ENCODE measurements at regions of chr6 and their contacts with region 1.

Region 1: GRCh38 chr6:44630125-44631028 is 242.9 kb downstream of the CDC5L start:
- DNase-seq: peak; percentile 55 to 67 (median 61)
- H3K4me3 ChIP-seq: no peak overlapping the region
- H3K27ac ChIP-seq: no peak overlapping the region
- H3K4me1 ChIP-seq: peaks cover 0 to 12% (median 10%) of the 10 kb centered on the region in 4 experiments
- H3K27me3 ChIP-seq: no peaks in the 10 kb centered on the region

Region 2: GRCh38 chr6:44606504-44606903 is 23.9 kb before region 1 on chr6:
- CTCF ChIA-PET with region 1: no interaction called
- POLR2A ChIA-PET with region 1: no interaction called
- DNase-seq: no peak
- H3K4me3 ChIP-seq: no peak overlapping the region
- H3K27ac ChIP-seq: no peak overlapping the region
- H3K4me1 ChIP-seq: no peaks in the 10 kb centered on the region
- H3K27me3 ChIP-seq: no peaks in the 10 kb centered on the region

Region 3: GRCh38 chr6:44618371-44618770 is 12.0 kb before region 1 on chr6:
- CTCF ChIA-PET with region 1: interaction called, 15 read pairs
- POLR2A ChIA-PET with region 1: interaction called, 3 read pairs
- DNase-seq: peak in 2 of 3 donors; percentile 66
- H3K4me3 ChIP-seq: no peak overlapping the region
- H3K27ac ChIP-seq: no peak overlapping the region
- H3K4me1 ChIP-seq: peaks cover 3 to 15% (median 10%) of the 10 kb centered on the region in 4 experiments
- H3K27me3 ChIP-seq: no peaks in the 10 kb centered on the region

Region 4: DNA sequence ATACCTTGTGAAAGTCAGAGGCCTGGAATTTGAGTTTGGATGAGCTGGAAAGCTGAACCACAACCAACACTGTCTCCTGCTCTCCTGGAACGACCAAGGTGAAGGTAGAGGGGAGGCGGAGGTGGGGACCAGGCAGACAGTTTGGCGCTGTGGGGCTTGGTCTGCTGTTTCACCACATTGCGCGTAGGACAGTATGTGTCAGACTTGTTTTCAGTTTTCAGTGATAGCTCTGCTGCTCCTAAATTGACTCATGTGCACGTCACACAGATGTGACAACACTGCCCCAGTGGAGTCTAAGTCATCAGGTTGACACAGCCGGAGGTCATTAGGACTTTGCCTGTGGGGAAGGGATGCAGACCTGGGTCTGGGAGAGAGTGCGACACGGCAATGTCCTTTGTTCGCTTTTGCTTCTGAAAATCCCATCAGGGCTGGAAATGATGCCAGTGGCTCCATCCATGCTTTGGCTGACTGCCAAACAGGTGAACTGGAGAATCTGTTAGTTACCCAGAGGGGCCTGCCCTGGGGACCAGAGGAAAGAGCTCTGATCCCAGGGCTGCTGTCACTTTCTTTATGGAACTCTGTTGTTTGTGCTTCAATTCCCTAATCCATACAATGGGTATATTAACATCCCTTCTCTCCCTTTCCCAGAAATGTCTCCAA is 12.6 kb after region 1 on chr6:
- CTCF ChIA-PET with region 1: interaction called, 11 read pairs
- POLR2A ChIA-PET with region 1: no interaction called
- DNase-seq: no peak
- H3K4me3 ChIP-seq: no peak overlapping the region
- H3K27ac ChIP-seq: no peak overlapping the region
- H3K4me1 ChIP-seq: peaks cover 0 to 7% (median 4%) of the 10 kb centered on the region in 4 experiments
- H3K27me3 ChIP-seq: no peaks in the 10 kb centered on the region

Region 5: DNA sequence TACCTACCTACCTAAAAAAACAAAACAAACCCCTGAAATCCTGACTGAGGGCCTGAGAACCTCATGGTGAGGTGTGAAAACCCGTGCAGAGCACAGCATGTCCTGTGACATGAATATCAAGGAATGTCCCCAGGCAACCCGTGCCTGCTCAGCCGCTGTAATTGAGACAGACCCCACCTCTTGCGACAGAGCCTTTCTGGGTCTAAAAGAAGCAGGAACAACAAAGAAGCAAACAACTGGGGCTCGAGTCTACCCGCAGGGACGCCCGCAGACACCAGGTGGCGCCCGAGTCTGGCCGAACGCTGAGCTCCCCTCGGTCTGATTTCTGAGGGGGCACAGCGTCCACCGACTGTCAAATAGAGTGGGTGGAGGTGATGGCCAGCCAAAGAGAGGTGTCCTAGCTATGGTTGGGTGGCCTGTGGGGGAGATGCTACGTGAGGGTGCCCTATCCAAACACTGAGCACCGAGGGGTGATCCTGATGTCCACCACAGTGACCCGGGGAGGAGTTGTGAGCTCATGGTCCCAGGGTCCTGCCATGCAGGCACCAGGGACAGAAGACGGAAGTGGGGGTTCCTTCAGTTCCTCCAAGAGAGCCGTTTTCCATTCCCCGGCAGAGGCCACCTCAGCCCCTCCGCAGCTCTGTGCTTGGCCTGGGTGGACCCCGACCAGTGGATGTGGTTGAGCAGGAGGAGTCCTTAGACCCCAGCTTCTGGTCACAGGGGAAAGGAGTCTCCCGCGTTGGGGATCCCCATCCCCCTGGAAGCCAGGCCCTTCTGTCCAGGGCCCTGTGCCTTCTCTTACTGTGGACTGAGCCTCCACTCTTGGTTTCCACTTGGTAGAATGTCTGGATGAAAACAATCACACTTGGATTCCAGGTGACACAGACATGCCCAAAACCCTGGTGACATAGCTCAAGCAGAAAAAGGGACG is 25.3 kb after region 1 on chr6:
- CTCF ChIA-PET with region 1: interaction called, 10 read pairs
- POLR2A ChIA-PET with region 1: no interaction called
- DNase-seq: peak; percentile 75 to 88 (median 87)
- H3K4me3 ChIP-seq: peak overlapping the region in 3 of 7 experiments; percentile 27 to 53 (median 35)
- H3K27ac ChIP-seq: no peak overlapping the region
- H3K4me1 ChIP-seq: peaks cover 0 to 23% (median 16%) of the 10 kb centered on the region in 4 experiments
- H3K27me3 ChIP-seq: no peaks in the 10 kb centered on the region

Region 6: DNA sequence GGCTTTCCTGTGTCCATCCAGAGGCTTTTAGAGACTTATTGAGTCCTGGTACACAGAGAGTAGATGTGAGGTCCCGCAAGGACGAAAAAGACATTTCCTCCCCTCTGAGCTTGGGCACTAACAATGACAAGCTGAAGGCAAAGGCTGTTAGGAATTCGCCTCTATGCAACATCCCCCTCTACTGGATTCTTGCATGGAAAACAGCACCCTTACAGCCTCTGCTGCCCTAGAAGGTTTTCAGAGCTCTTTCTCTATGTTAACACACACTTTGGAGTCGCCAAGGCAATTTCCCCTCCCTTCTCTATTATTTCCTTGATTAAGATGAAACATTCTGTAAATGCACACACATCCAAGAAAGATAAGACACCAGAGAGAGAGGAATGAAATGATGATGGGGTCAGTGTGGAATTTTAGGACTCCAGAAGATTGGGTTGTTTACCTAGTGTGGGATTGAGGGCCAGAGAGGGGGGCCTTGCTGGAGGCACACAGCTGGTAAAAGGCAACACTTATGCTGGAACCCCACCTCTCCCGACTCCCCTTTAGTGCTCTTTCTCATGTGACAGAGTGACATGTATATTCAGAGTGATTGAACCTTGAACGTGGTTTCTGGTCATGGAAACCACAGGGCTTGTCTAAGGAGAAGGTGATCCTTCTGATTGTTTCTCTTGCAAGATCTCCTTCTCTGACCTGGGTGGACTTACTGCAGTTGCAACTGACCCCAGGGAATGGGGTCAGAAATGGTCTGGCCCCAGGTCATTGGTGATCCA is 1084.5 kb after region 1 on chr6:
- CTCF ChIA-PET with region 1: interaction called, 11 read pairs
- POLR2A ChIA-PET with region 1: no interaction called
- DNase-seq: peak; percentile 81 to 86 (median 84)
- H3K4me3 ChIP-seq: no peak overlapping the region
- H3K27ac ChIP-seq: no peak overlapping the region
- H3K4me1 ChIP-seq: peaks cover 0 to 50% (median 20%) of the 10 kb centered on the region in 4 experiments
- H3K27me3 ChIP-seq: no peaks in the 10 kb centered on the region

Measured in common myeloid progenitor, CD34-positive (primary cell).